Left ventricle myocardium superior (tissue), 1 donor: ENCODE measurements at regions of chr9 and their contacts with region 1.

Region 1: GRCh38 chr9:27379311-27380251 is 82.6 kb upstream of the EQTN start:
- DNase-seq: no peak
- ATAC-seq: no peak

Region 2: DNA sequence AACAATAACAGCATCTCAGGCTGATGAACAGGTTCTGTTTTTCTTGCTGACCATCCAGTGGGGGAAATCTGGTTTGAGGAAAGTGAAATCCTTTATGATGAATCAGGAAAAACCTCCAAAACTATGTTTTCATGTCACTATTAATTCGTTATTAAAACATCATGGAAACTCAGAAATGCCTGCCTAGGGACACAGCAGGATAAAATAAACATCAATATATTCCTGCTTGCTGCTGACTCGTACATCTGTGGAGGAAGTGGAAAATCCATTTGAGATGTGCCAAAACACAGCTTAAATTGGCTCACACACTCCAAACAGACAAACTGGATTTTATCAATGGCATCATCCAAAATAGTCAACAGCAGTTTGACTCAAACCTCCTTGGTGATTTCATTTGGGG is 217.5 kb before region 1 on chr9:
- intact Hi-C with region 1: no loop called
- DNase-seq: no peak
- ATAC-seq: no peak

Region 3: GRCh38 chr9:27261517-27262211 is 117.9 kb before region 1 on chr9:
- intact Hi-C with region 1: no loop called
- DNase-seq: no peak
- ATAC-seq: no peak

Region 4: DNA sequence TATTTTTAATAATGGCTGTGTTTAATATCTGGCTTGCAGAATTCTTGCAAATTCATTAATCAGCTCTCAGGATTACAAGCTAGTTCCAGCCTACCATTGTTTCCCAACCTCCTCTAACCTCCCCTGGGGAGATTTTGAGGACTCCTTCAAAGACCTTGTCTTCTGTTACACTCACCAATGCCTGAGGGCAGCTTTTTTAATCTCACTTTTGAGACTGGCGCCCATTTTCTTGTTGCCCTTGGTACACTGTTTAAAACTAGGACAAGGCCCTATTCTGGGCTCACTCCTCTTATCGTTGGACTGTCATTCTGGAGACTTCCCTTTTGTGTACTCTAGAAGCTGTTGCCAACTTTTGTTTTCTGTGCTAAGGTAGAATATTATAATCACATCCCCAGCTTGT is 69.0 kb before region 1 on chr9:
- intact Hi-C with region 1: no loop called
- DNase-seq: no peak
- ATAC-seq: peak; percentile 74

Region 5: DNA sequence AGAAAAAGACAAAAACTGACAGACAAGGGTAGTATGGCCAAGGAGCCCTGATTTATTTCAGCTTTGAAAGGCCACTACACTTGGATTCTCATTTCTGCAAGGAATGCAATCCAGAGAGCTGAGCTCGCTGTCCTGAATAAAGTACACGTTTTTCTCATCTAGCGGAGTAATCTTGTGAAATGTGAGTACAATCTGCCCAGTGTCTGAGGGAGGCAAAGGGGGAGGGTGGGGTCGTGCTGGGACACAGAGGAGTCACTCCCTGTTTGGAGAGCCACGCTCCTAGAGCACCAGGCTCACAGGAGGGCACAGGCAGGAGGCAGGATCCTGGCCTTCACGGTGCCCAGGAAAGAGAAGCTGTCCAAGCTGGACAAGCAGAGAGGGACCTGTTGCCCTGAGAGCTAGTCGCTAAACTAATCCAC is 93.5 kb after region 1 on chr9:
- intact Hi-C with region 1: loop called (anchors 10 kb)
- DNase-seq: peak; percentile 49
- ATAC-seq: peak; percentile 81